ENCODE measurements at regions of chr11 and their contacts with region 1.

Region 1: DNA sequence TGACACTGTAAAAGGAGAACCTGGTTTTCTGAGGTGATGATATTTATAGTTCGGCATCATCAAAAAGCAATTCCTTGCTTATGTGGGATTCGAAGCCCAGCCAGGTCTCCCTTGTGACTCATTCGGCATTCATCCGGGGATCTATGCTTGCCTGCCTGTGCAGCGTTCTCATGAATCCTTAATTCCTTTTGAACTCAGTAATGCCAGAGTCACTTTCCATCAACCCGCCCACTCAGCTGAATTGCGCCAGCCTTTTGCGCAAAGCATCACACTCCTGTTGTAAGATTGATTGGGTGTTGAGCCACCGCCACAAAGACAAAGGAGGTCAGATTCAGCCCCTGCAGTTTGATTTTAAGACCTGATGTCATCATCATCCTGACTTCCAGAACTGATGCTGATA is 128.6 kb downstream of the SLC17A6 start:
- DNase-seq: peak; percentile 97
- H3K4me3 Mint-ChIP-seq: no peak overlapping the region
- H3K27ac Mint-ChIP-seq: no peak overlapping the region
- H3K4me1 Mint-ChIP-seq: peaks cover 18% of the 10 kb centered on the region
- H3K27me3 Mint-ChIP-seq: no peaks in the 10 kb centered on the region
- CTCF ChIP-seq: no peak

Region 2: GRCh38 chr11:22426915-22427314 is 39.9 kb before region 1 on chr11:
- CTCF ChIA-PET with region 1: no interaction called
- POLR2A ChIA-PET with region 1: no interaction called
- intact Hi-C with region 1: no loop called
- DNase-seq: no peak
- H3K4me3 Mint-ChIP-seq: no peak overlapping the region
- H3K27ac Mint-ChIP-seq: no peak overlapping the region
- H3K4me1 Mint-ChIP-seq: no peaks in the 10 kb centered on the region
- H3K27me3 Mint-ChIP-seq: peaks cover 44% of the 10 kb centered on the region
- CTCF ChIP-seq: peak; percentile 22

Region 3: GRCh38 chr11:22510741-22511140 is 43.9 kb after region 1 on chr11:
- CTCF ChIA-PET with region 1: no interaction called
- POLR2A ChIA-PET with region 1: interaction called, 3 read pairs
- intact Hi-C with region 1: loop called (anchors 5 kb)
- DNase-seq: peak; percentile 79
- H3K4me3 Mint-ChIP-seq: peak overlapping the region; percentile 21
- H3K27ac Mint-ChIP-seq: peak overlapping the region; percentile 0
- H3K4me1 Mint-ChIP-seq: peaks cover 12% of the 10 kb centered on the region
- H3K27me3 Mint-ChIP-seq: no peaks in the 10 kb centered on the region
- CTCF ChIP-seq: no peak

Region 4: GRCh38 chr11:22521226-22521625 is 54.4 kb after region 1 on chr11:
- CTCF ChIA-PET with region 1: no interaction called
- POLR2A ChIA-PET with region 1: no interaction called
- intact Hi-C with region 1: loop called (anchors 2 kb)
- DNase-seq: peak; percentile 60
- H3K4me3 Mint-ChIP-seq: no peak overlapping the region
- H3K27ac Mint-ChIP-seq: peak overlapping the region; percentile 70
- H3K4me1 Mint-ChIP-seq: peaks cover 5% of the 10 kb centered on the region
- H3K27me3 Mint-ChIP-seq: no peaks in the 10 kb centered on the region
- CTCF ChIP-seq: no peak